Activated T-helper 2 cell treated with anti-CD3 and anti-CD28 coated beads, Interferon-gamma antibody, Interleukin-2, Interleukin-4, amounts not matched to agents 10 μg/mL and 5 μg/mL and 100 μg/mL, durations not matched to agents 14 hours and 24 hours and 36 hours (primary cell): ENCODE measurements at regions of chr10 and their contacts with region 1.

Region 1: DNA sequence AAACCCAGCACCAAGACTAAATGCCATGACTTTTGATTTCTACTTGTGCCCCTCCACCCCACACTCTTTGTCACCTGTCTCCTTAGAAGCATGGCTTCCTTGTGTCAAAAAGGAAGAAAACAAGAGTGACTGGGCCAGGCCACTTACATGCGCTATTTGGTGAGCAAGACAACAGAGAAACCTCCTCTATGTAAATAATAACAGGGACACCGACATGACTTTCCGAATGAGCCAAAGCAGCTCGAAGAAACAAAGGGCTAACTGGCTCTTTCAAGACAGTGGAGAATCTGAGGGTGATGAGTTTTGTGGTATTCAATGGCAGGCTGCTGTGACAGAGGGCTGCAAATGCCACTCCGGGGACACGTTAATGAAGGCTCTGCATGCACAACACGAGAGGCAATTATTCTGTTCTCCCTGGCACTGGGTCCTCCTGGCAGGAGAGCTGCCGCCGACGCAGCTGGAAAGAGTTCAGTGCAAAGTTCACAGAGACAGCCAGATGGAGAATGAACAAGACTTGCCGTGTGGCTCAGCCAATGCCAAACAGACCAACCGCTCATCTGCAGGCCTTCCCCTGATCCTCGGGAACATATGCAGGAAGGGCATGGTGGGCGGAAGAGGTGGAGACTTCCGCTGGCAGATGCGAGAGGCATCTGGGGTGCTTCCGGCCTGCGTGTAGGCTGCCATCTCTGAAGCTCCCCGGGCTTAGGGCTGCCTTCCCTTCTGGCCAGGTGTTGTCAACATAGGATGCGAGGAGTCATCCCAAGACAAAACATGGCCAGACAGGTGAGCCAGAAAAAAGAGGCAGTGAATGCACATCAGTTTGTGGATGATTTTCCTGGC is 59.1 kb upstream of the SMNDC1 start:
- DNase-seq: no peak
- H3K4me3 Mint-ChIP-seq: no peak overlapping the region
- H3K27ac Mint-ChIP-seq: peak overlapping the region; percentile 94
- H3K4me1 Mint-ChIP-seq: peaks cover 73% of the 10 kb centered on the region
- H3K27me3 Mint-ChIP-seq: no peaks in the 10 kb centered on the region

Region 2: GRCh38 chr10:110387983-110388687 is 24.3 kb after region 1 on chr10:
- intact Hi-C with region 1: loop called (anchors 2 kb)
- DNase-seq: no peak
- H3K4me3 Mint-ChIP-seq: peak overlapping the region; percentile 26
- H3K27ac Mint-ChIP-seq: peak overlapping the region; percentile 89
- H3K4me1 Mint-ChIP-seq: peaks cover 48% of the 10 kb centered on the region
- H3K27me3 Mint-ChIP-seq: no peaks in the 10 kb centered on the region